ENCODE measurements at regions of chr6 and their contacts with region 1.

Region 1: DNA sequence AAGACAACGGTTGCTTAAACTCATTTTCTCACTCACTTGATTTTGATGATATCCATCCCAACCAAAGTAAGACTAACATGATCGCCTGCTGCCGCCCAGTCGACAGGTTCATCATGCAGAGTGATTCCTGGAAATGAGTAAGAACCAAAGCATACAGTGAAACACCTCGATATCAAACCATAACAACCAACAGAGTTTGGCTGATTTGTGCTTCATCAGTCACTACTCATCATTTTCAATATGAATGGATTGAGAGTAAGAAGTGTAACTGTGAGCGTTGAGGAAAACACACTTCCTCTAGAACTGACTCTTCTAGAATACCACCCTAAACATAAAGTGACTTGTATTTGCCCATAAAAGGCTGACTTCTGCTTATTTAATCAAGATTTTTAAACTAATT is 29.2 kb upstream of the ALDH8A1 start:
- DNase-seq: peak; percentile 78
- H3K4me3 Mint-ChIP-seq: no peak overlapping the region
- H3K27ac Mint-ChIP-seq: peak overlapping the region; percentile 72
- H3K4me1 Mint-ChIP-seq: peaks cover 45% of the 10 kb centered on the region
- H3K27me3 Mint-ChIP-seq: no peaks in the 10 kb centered on the region

Region 2: DNA sequence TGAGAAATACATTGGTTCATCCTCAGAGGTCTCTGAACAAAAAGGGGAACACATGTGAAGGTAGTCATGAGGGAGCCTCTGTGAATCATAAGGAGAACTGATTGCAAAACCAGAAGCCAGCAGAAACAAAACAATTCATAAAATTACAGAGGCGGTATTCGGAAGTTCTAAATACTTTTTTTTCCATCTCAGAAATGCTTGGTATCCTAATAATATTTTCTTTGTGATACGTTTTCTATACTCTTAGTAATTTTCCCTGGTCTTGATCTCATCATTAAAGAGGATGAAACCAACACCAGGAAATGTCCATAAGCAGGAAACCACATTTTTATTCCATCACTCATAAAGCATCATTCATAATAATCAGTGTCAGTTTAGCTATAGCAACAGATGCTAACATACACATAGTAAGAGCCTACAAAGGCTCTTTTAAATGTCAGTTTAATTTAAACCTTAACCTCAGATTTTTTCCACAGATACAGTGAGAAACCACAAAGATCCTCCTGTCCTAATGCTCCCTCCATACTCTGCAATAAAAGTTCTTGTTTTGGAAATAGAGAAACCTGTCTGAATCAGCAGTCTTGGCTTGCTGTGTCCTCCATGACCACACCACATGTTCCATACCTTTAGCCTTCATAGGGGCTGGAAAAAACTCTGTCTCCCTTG is 690.5 kb before region 1 on chr6:
- CTCF ChIA-PET with region 1: no interaction called
- POLR2A ChIA-PET with region 1: no interaction called
- intact Hi-C with region 1: loop called (anchors 1 kb)
- DNase-seq: peak; percentile 15
- H3K4me3 Mint-ChIP-seq: peak overlapping the region; percentile 21
- H3K27ac Mint-ChIP-seq: peak overlapping the region; percentile 85
- H3K4me1 Mint-ChIP-seq: peaks cover 22% of the 10 kb centered on the region
- H3K27me3 Mint-ChIP-seq: no peaks in the 10 kb centered on the region

Region 3: DNA sequence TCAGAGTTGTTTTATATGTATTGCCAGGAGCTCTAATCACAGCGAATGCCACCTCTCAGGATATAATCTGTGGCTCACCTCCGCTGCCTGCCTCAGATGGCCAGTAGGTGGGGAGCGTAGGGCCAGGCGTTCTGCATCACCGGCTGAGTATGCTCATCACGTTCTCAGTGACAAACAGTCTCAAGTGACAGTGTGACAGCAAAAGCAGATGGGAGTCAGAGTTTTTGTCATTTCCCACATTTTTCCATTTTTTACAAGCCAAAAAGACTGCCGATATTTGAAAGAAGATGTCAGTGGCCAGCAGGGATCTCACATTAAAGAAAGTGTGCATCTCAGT is 238.0 kb before region 1 on chr6:
- CTCF ChIA-PET with region 1: no interaction called
- POLR2A ChIA-PET with region 1: no interaction called
- intact Hi-C with region 1: no loop called
- DNase-seq: no peak
- H3K4me3 Mint-ChIP-seq: no peak overlapping the region
- H3K27ac Mint-ChIP-seq: no peak overlapping the region
- H3K4me1 Mint-ChIP-seq: no peaks in the 10 kb centered on the region
- H3K27me3 Mint-ChIP-seq: peaks cover 21% of the 10 kb centered on the region

Region 4: DNA sequence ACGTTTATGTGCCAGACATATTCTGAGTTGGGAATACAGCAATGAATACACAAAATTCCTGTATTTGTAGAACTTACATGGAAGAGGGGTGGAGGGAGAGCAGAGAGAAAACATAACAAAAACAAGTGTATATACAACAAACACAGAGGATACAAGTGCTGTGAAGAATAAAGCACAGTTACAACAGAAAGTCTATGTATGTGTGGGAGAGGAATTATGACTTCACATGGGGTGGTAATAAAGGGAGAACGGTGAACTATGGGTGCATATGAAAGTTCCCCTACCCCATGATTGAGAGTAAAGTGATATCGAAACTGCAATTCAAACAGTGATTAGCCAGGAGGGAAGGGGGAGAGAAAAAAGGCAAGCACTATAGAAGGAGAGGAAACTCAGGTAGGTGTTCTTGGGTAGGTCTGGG is 50.9 kb after region 1 on chr6:
- CTCF ChIA-PET with region 1: no interaction called
- POLR2A ChIA-PET with region 1: no interaction called
- intact Hi-C with region 1: loop called (anchors 1 kb)
- DNase-seq: no peak
- H3K4me3 Mint-ChIP-seq: peak overlapping the region; percentile 0
- H3K27ac Mint-ChIP-seq: peak overlapping the region; percentile 52
- H3K4me1 Mint-ChIP-seq: peaks cover 58% of the 10 kb centered on the region
- H3K27me3 Mint-ChIP-seq: no peaks in the 10 kb centered on the region

Region 5: DNA sequence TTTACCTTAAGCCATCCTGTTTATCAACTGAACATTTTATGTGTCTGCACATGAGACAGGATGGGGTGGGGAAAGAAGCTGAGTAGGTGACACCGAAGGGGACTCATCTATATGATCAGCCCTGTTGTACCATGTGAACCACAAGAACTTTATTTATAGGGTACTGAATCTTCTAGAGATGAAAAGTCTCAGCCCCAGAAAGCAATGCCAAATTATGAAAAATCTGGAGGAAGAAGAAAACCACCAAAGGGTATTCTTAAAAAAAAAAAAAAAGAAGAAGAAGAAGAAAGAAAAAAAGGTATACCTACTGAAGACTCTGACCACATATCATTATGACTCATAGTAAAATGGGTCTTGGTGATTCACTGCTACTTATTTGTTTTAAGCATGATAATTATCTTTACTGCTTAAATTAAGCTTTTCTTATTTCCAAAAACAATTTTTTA is 115.3 kb after region 1 on chr6:
- CTCF ChIA-PET with region 1: no interaction called
- POLR2A ChIA-PET with region 1: no interaction called
- intact Hi-C with region 1: loop called (anchors 1 kb)
- DNase-seq: peak; percentile 50
- H3K4me3 Mint-ChIP-seq: no peak overlapping the region
- H3K27ac Mint-ChIP-seq: peak overlapping the region; percentile 76
- H3K4me1 Mint-ChIP-seq: peaks cover 49% of the 10 kb centered on the region
- H3K27me3 Mint-ChIP-seq: no peaks in the 10 kb centered on the region

Region 6: GRCh38 chr6:135170849-135171248 is 191.7 kb after region 1 on chr6:
- CTCF ChIA-PET with region 1: no interaction called
- POLR2A ChIA-PET with region 1: no interaction called
- intact Hi-C with region 1: loop called (anchors 1 kb)
- DNase-seq: peak; percentile 63
- H3K4me3 Mint-ChIP-seq: peak overlapping the region; percentile 17
- H3K27ac Mint-ChIP-seq: peak overlapping the region; percentile 87
- H3K4me1 Mint-ChIP-seq: peaks cover 16% of the 10 kb centered on the region
- H3K27me3 Mint-ChIP-seq: no peaks in the 10 kb centered on the region

Region 7: GRCh38 chr6:135191508-135192255 is 212.5 kb after region 1 on chr6:
- CTCF ChIA-PET with region 1: no interaction called
- POLR2A ChIA-PET with region 1: no interaction called
- intact Hi-C with region 1: no loop called
- DNase-seq: no peak
- H3K4me3 Mint-ChIP-seq: no peak overlapping the region
- H3K27ac Mint-ChIP-seq: no peak overlapping the region
- H3K4me1 Mint-ChIP-seq: peaks cover 14% of the 10 kb centered on the region
- H3K27me3 Mint-ChIP-seq: no peaks in the 10 kb centered on the region

Measured in activated CD4-positive, alpha-beta memory T cell treated with anti-CD3 and anti-CD28 coated beads for 36 hours (primary cell).